Right ventricle myocardium inferior (tissue), 1 donor: ENCODE measurements at regions of chr1 and their contacts with region 1.

Region 1: GRCh38 chr1:16055613-16056520 is 12.3 kb downstream of the CLCNKB start:
- DNase-seq: peak; percentile 93
- ATAC-seq: peak; percentile 71

Region 2: DNA sequence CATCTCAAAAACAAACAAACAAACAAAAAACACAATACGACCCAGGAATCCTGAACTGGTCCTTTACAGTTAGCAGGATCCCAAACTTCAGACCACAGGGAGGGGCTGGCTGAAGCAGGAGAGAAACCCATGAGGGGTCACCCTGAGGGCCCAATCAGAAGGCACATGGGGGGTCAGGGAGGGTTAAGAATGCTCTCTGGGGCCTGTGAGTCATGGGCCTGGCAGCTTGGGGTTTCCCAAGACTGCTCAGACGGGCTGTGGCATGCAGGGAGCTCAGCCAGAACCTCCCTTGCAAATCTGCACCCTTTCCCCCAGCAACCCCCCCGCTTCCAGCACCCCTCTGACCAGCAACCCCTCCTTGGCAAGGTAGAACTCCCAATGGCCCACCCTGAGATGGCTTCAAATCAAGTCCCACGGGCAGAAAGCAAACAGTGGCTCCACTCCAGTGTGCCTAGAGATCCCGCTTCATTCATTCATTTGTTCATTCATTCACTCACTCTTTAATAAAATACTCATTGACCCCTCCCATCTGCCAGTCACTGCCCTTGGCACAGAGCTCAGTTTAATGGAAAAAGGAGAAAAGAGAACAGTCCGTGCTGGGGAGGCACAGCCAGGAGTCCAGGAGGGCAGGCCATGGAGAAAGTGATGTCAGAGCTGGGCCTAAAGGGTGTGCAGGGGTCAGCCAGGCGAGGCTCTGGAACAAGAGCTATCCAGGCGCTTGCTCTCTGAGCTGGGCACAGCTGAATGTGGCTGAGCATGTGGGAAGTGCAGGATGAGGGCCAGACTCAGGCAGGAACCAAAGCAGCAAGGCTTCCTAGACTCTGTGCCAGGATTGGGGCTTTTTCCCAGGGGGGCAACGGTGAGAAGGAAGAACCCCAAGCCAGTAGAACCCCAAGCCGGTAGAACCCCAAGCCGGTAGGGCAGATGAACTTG is 256.6 kb before region 1 on chr1:
- intact Hi-C with region 1: loop called (anchors 5 kb)
- DNase-seq: peak; percentile 75
- ATAC-seq: peak; percentile 57